CD14-positive monocyte (primary cell): ENCODE measurements at regions of chr16 and their contacts with region 1.

Region 1: GRCh38 chr16:4048481-4048880 is 67.8 kb downstream of the ADCY9 start:
- DNase-seq: no peak
- H3K4me3 ChIP-seq: no peak overlapping the region
- H3K4me3 Mint-ChIP-seq: no peak overlapping the region
- H3K27ac ChIP-seq: no peak overlapping the region
- H3K27ac Mint-ChIP-seq: peak overlapping the region in 4 of 7 donors; percentile 10 to 50 (median 36)
- H3K4me1 ChIP-seq: peaks cover 26 to 39% of the 10 kb centered on the region in 2 donors
- H3K4me1 Mint-ChIP-seq: peaks cover 39% of the 10 kb centered on the region
- H3K27me3 ChIP-seq: no peaks in the 10 kb centered on the region
- H3K27me3 Mint-ChIP-seq: peaks cover 0 to 2% (median 0%) of the 10 kb centered on the region in 3 donors
- CTCF ChIP-seq: no peak

Region 2: DNA sequence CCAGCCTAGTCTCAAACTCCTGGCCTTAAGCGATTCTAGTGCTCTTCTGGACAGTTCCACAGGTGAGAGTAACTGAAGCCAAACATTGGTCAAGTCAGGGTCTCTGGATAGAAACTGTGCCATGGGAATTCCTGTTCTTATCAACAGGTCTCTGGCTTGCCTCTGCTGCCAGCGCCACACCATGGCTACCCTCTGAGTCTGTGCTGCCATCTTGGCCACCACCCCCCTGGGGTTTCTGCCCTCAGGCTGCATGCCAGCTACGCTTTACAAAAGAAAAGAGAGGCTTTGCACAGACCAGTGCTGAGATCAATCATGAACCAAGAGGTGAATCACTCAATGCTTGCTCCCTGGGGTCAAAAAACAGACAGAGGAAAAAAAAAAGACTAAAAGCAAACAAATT is 143.6 kb before region 1 on chr16:
- intact Hi-C with region 1: no loop called
- DNase-seq: no peak
- H3K4me3 ChIP-seq: no peak overlapping the region
- H3K4me3 Mint-ChIP-seq: no peak overlapping the region
- H3K27ac ChIP-seq: no peak overlapping the region
- H3K27ac Mint-ChIP-seq: peak overlapping the region in 1 of 7 donors; percentile 50
- H3K4me1 ChIP-seq: peaks cover 6 to 8% of the 10 kb centered on the region in 2 donors
- H3K4me1 Mint-ChIP-seq: peaks cover 11% of the 10 kb centered on the region
- H3K27me3 ChIP-seq: no peaks in the 10 kb centered on the region
- H3K27me3 Mint-ChIP-seq: peaks cover 7 to 29% (median 18%) of the 10 kb centered on the region in 3 donors
- CTCF ChIP-seq: no peak

Region 3: DNA sequence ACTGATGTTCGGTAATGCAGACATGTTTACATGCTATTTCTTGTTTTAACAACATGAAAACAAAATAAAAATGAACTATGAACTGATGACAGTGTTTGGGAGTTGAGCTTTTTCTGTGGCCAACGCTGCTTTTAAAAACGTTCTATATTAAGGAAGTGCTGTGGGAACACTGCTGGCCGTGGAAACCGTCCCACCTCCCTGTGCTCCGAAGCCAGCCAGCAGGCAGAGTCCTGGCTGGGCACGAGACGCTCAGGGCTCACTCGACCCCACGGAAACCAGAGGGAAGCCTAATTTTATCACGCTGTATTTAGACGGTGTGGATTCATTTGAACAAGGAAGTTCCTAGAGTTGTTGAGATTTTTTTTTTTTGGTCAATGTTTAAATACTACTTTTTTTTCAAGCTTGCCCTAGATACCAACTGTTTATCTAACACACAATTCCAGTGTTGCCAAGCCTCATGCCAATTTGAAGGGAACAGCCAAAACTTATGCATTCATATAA is 41.9 kb after region 1 on chr16:
- intact Hi-C with region 1: no loop called
- DNase-seq: peak; percentile 33 to 42 (median 39)
- H3K4me3 ChIP-seq: peak overlapping the region in 1 of 3 experiments; percentile 15
- H3K4me3 Mint-ChIP-seq: peak overlapping the region; percentile 47 to 76
- H3K27ac ChIP-seq: peak overlapping the region in 1 of 2 donors; percentile 6
- H3K27ac Mint-ChIP-seq: peak overlapping the region in 4 of 7 donors; percentile 31 to 70 (median 52)
- H3K4me1 ChIP-seq: peaks cover 37 to 39% of the 10 kb centered on the region in 2 donors
- H3K4me1 Mint-ChIP-seq: peaks cover 38% of the 10 kb centered on the region
- H3K27me3 ChIP-seq: no peaks in the 10 kb centered on the region
- H3K27me3 Mint-ChIP-seq: peaks cover 0 to 3% (median 1%) of the 10 kb centered on the region in 3 donors
- CTCF ChIP-seq: no peak

Region 4: DNA sequence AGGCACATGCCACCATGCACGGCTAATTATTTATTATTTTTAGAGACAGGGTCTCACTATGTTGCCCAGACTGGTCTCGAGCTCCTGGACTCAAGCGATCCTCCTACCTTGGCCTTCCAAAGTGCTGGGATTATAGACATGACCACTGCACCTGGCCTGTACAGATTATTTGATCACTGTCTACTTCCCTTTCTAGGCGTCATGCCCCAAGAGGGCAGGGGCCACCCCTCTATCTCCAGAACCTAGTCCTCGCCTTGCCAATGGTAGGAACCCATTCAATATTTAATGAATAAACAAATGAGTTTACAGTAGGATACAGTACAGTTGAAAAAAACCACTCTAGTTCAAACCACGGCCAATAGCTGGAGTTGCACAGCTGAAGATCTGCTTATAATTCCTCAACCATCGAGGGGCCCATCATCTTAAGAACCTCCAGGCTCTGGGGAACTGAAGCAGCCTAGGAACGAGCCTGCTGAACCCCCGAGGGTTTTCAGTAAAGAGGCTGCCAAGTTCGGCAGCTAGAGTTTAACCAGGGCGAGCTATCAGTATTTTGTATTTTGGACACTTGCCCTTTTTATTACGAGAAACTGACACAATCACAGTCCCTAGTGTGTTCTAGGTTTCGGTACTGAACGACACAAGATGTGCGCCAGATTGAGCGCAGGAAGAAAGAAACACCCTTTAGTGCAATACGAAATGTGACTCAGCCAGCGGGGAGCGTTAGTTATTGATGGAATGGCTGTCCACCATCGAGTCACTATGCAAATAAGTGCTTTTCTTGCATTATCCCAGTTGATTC is 53.1 kb after region 1 on chr16:
- intact Hi-C with region 1: loop called in 1 of 2 experiments (anchors 10 kb)
- DNase-seq: no peak
- H3K4me3 ChIP-seq: no peak overlapping the region
- H3K4me3 Mint-ChIP-seq: no peak overlapping the region
- H3K27ac ChIP-seq: no peak overlapping the region
- H3K27ac Mint-ChIP-seq: no peak overlapping the region
- H3K4me1 ChIP-seq: peaks cover 2 to 3% of the 10 kb centered on the region in 2 donors
- H3K4me1 Mint-ChIP-seq: peaks cover 6% of the 10 kb centered on the region
- H3K27me3 ChIP-seq: no peaks in the 10 kb centered on the region
- H3K27me3 Mint-ChIP-seq: peaks cover 0 to 1% (median 0%) of the 10 kb centered on the region in 3 donors
- CTCF ChIP-seq: no peak

Region 5: GRCh38 chr16:4140652-4141051 is 92.2 kb after region 1 on chr16:
- intact Hi-C with region 1: no loop called
- DNase-seq: no peak
- H3K4me3 ChIP-seq: no peak overlapping the region
- H3K4me3 Mint-ChIP-seq: no peak overlapping the region
- H3K27ac ChIP-seq: no peak overlapping the region
- H3K27ac Mint-ChIP-seq: peak overlapping the region in 1 of 7 donors; percentile 77
- H3K4me1 ChIP-seq: peaks cover 16 to 18% of the 10 kb centered on the region in 2 donors
- H3K4me1 Mint-ChIP-seq: peaks cover 14% of the 10 kb centered on the region
- H3K27me3 ChIP-seq: peaks cover 0 to 3% of the 10 kb centered on the region in 2 donors
- H3K27me3 Mint-ChIP-seq: peaks cover 13 to 29% (median 16%) of the 10 kb centered on the region in 3 donors
- CTCF ChIP-seq: no peak